PC-3 (cell line): ENCODE measurements at regions of chrX and their contacts with region 1.

Region 1: DNA sequence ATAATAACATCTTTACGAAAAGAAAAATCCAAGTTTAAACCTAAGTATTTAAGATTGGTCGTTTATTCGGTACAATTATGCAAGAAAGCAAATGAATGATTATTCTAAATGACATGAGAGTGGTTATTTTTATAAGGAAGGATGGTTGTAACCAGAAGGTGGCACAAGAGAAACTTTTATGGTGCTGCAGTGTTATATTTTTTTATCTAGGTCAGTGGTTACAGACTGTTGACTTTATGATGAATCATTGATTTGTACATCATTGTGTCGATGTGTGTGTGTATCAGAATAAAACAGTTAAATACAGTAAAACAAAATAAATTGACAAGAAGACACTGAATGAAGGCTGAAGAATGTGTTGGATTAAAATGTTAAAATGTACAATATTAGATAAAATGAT is 9.8 kb downstream of the DCAF8L2 start:
- DNase-seq: peak; percentile 73
- ATAC-seq: peak; percentile 90
- H3K4me3 ChIP-seq: peak overlapping the region; percentile 48
- H3K27ac ChIP-seq: peak overlapping the region; percentile 91
- H3K4me1 ChIP-seq: peaks cover 11% of the 10 kb centered on the region
- H3K27me3 ChIP-seq: no peaks in the 10 kb centered on the region
- CTCF ChIP-seq: peak; percentile 68

Region 2: DNA sequence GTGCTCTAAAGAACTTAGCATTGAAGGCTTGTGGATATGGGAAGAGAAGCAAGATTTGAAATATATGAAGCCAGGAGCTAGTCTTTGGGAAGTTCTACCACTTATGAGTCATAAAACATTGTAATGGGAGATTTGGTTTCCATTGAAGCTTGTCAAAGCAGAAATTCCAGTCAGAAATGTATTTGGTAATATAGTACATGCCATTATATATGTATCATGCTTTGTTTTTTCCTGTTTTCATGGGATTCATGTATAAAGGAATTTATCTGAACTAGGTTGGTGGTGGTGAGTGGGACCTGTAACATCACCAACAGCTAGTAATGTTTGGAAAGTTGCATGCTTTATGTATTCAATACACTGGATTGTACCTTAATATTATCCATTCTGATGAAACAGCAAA is 24.4 kb before region 1 on chrX:
- CTCF ChIA-PET with region 1: no interaction called
- POLR2A ChIA-PET with region 1: no interaction called
- intact Hi-C with region 1: no loop called
- DNase-seq: peak; percentile 73
- ATAC-seq: peak; percentile 15; the same call in 1 of the 2 replicates
- H3K4me3 ChIP-seq: no peak overlapping the region
- H3K27ac ChIP-seq: peak overlapping the region; percentile 43; the same call in 1 of the 2 replicates
- H3K4me1 ChIP-seq: peaks cover 15% of the 10 kb centered on the region; the same call in 1 of the 2 replicates
- H3K27me3 ChIP-seq: no peaks in the 10 kb centered on the region
- CTCF ChIP-seq: no peak

Region 3: DNA sequence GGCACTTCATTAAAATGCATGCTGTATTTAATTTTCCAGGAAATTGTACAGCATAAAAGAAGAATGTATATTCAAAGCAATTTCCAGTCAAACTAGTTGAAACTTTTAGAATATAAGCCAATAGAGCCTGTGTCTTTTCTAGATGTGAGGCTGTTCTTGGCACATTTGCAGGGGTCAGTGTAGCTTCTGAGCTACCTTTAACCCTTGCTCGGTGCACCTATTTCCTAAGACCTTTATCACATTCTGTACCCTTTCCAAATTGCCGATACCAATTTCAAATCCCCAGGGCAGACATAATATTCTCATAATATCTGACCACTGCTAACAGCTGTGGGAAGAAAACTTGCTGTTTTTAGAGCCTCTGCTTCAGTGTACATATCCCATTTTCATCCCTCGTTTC is 33.4 kb after region 1 on chrX:
- CTCF ChIA-PET with region 1: no interaction called
- POLR2A ChIA-PET with region 1: no interaction called
- intact Hi-C with region 1: no loop called
- DNase-seq: no peak
- ATAC-seq: no peak
- H3K4me3 ChIP-seq: no peak overlapping the region
- H3K27ac ChIP-seq: no peak overlapping the region
- H3K4me1 ChIP-seq: no peaks in the 10 kb centered on the region
- H3K27me3 ChIP-seq: no peaks in the 10 kb centered on the region
- CTCF ChIP-seq: no peak

Region 4: GRCh38 chrX:27680726-27681125 is 80.8 kb after region 1 on chrX:
- CTCF ChIA-PET with region 1: no interaction called
- POLR2A ChIA-PET with region 1: no interaction called
- intact Hi-C with region 1: loop called (anchors 5 kb)
- DNase-seq: peak; percentile 3
- ATAC-seq: no peak
- H3K4me3 ChIP-seq: no peak overlapping the region
- H3K27ac ChIP-seq: no peak overlapping the region
- H3K4me1 ChIP-seq: no peaks in the 10 kb centered on the region
- H3K27me3 ChIP-seq: no peaks in the 10 kb centered on the region
- CTCF ChIP-seq: no peak

Region 5: DNA sequence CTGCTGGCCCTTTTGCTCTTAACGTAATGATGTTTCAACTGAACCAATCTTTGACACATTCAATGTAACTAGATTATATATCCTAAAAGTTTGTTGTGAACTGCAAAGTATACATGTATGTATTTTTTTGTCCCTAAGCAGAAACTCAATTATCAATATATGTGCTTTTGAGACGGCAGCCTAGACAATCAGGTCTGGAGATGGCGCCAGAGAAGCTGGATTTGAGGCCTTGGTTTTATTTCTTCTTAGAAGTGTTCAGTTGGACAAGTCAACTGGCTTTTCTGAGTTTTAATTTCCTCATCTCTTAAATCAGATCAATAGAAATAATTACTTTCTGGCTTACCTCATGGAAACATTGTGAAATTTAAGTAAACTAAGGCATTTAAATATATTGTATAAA is 318.9 kb after region 1 on chrX:
- CTCF ChIA-PET with region 1: no interaction called
- POLR2A ChIA-PET with region 1: no interaction called
- intact Hi-C with region 1: loop called (anchors 10 kb)
- DNase-seq: peak; percentile 46
- ATAC-seq: no peak
- H3K4me3 ChIP-seq: no peak overlapping the region
- H3K27ac ChIP-seq: no peak overlapping the region
- H3K4me1 ChIP-seq: no peaks in the 10 kb centered on the region
- H3K27me3 ChIP-seq: no peaks in the 10 kb centered on the region
- CTCF ChIP-seq: peak; percentile 51